WTC11 (cell line): ENCODE measurements at regions of chr12 and their contacts with region 1.

Region 1: DNA sequence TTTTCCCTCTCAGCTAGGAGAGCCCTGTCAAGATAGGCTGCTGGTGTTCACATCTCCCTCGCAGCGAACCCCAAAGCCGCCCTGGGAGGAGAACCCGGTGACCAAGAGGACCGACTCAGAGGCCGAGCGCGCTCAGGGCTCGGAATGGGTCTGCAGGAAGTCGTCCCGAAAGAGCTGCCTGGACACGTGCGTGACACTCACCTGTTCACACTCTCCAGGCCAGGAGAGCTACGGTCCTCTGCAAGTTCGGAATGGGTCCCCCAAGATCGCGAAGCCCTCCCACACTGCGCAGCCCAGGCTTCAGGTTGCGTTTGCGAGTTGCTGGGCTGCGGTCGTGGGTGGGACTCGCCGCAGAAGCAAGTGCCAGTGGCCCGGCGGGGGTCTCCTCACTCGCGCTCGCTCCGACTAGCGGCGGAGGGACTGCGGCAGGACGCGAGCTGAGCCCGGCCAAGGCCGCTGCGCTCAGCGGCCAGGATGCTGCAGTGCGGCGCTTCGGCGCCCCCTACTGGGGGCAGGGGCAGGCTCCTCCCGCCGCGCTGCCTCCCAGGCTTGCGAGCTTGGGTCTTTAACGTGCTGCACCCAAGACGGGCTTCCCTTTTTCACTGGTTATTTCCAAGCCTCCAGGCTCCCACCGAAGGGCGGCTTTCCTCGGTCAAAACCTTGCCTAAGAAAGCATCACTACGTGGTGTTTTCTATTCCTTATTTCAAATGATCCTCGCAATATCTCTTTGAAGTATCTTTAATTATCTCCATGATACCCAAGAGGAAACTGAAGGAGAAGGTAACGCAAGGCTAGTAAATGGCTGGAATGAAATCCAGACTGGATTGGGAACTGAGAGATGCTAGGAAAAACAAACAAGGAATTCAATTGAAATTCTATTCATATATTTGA is at the start of gene RERG:
- DNase-seq: peak; percentile 89
- ATAC-seq: peak; percentile 97
- H3K4me3 Mint-ChIP-seq: peak within 1 kb of the TSS; percentile 75
- H3K27ac Mint-ChIP-seq: no peak within 1 kb of the TSS
- H3K4me1 Mint-ChIP-seq: peaks cover 15% of the 10 kb centered on the region
- H3K27me3 Mint-ChIP-seq: peaks cover 31% of the 10 kb centered on the region
- CTCF ChIP-seq: peak; percentile 93
- total RNA-seq, gene RERG: 0.21 to 0.73 TPM (median 0.28 TPM) in 3 replicates

Region 2: GRCh38 chr12:14810953-14811483 is 410.2 kb before region 1 on chr12:
- CTCF ChIA-PET with region 1: interaction called, 14 read pairs
- POLR2A ChIA-PET with region 1: no interaction called
- DNase-seq: peak; percentile 49
- ATAC-seq: peak; percentile 96
- H3K4me3 Mint-ChIP-seq: no peak overlapping the region
- H3K27ac Mint-ChIP-seq: no peak overlapping the region
- H3K4me1 Mint-ChIP-seq: no peaks in the 10 kb centered on the region
- H3K27me3 Mint-ChIP-seq: no peaks in the 10 kb centered on the region
- CTCF ChIP-seq: no peak

Region 3: DNA sequence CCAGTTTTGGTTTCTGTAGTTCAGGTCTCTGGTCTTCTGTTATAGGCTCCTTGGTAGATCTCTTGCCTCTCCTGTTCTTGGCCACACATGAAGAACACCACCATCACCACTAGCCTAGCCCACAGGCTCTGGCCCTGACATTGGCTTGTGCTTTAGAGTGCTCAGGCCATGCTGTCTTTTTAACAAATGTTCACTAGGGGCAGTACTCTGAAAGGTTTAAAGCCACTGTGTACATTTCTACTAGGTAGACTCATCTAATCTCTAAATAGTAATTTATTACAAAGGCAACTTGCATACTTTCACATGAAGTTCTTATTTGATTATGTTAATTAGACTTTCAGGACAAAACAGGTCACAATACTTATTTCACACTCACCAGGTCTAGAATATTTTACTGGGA is 210.1 kb before region 1 on chr12:
- CTCF ChIA-PET with region 1: interaction called, 14 read pairs
- POLR2A ChIA-PET with region 1: no interaction called
- DNase-seq: no peak
- ATAC-seq: peak; percentile 98
- H3K4me3 Mint-ChIP-seq: no peak overlapping the region
- H3K27ac Mint-ChIP-seq: no peak overlapping the region
- H3K4me1 Mint-ChIP-seq: no peaks in the 10 kb centered on the region
- H3K27me3 Mint-ChIP-seq: no peaks in the 10 kb centered on the region
- CTCF ChIP-seq: no peak

Region 4: DNA sequence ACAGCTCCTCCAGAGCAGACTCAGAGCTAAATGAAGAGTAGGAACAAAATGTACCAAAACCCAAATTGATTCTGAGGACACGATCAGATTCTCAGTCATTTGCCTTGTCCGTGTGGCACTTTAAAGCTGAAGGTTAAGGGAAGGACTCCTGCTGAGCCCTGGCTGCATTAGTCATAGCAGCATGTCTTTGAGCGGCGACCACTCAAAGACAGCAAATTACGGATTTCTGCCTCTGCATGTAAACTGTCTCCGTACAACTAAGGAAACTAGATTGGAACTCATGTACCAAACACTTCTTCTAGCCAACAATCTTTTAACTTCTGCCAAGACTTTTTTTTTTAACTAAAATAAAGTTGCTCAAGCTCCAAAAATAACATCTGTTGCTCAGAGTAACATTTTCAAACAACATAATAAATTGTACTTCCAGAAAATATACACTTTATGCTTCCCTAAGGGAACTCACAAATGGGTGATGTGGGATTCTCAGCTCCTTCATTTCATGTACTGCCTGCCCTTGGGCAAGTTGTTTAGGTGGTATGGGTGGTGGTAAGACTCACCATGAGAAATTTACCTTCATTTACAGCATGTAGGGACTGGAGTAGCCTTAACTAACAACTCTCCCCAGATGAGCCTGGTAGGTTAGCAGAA is 56.1 kb before region 1 on chr12:
- CTCF ChIA-PET with region 1: interaction called, 16 read pairs
- POLR2A ChIA-PET with region 1: no interaction called
- DNase-seq: no peak
- ATAC-seq: peak; percentile 38
- H3K4me3 Mint-ChIP-seq: no peak overlapping the region
- H3K27ac Mint-ChIP-seq: no peak overlapping the region
- H3K4me1 Mint-ChIP-seq: peaks cover 15% of the 10 kb centered on the region
- H3K27me3 Mint-ChIP-seq: no peaks in the 10 kb centered on the region
- CTCF ChIP-seq: no peak

Region 5: GRCh38 chr12:15522565-15523187 is 301.4 kb after region 1 on chr12:
- CTCF ChIA-PET with region 1: interaction called, 20 read pairs
- POLR2A ChIA-PET with region 1: no interaction called
- DNase-seq: no peak
- ATAC-seq: peak; percentile 29; the same call in 1 of the 2 replicates
- H3K4me3 Mint-ChIP-seq: no peak overlapping the region
- H3K27ac Mint-ChIP-seq: no peak overlapping the region
- H3K4me1 Mint-ChIP-seq: peaks cover 16% of the 10 kb centered on the region
- H3K27me3 Mint-ChIP-seq: no peaks in the 10 kb centered on the region; the same call in 1 of the 2 replicates
- CTCF ChIP-seq: no peak